ENCODE measurements at regions of chr11 and their contacts with region 1.

Region 1: DNA sequence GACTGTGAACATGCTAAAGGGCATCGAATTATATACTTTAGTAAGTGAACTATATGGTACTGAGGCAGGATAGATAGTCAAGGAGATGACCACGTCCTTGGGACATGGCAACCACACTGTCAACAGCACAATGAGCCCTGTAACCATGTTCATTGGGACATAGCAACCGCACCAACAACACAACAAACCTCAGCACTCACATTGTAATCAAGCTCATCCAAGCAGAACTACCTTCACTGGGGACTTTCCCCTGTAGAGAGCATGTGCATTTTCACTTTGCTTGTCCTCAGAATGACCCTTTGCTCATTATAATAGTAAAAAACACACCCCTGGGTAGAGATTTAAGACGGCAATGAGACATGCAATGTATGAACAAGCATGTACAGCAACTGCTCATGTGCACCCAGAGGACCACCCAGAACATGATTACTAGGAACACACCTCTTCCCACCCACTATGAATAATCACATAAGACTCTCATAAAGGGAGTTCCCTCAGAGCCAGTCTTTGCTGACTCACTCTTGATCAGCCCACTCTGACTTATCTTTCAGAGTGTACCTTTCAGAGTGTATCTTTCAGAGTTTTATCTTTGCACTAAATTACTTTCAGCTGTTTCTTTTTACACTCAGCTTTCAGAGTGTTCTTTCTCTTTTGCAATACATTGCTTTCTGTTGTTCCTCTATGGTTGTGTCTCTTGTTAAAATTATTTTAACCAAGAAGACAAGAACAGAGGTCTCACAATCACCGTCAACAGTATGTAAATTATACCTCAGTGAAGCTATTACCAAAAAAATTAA is 4.1 kb upstream of the PLAAT2 start:
- DNase-seq: peak; percentile 44
- ATAC-seq: peak; percentile 79
- H3K4me3 Mint-ChIP-seq: peak overlapping the region; percentile 78
- H3K27ac Mint-ChIP-seq: peak overlapping the region; percentile 96
- H3K4me1 Mint-ChIP-seq: peaks cover 58% of the 10 kb centered on the region
- H3K27me3 Mint-ChIP-seq: peaks cover 5% of the 10 kb centered on the region
- CTCF ChIP-seq: no peak

Region 2: DNA sequence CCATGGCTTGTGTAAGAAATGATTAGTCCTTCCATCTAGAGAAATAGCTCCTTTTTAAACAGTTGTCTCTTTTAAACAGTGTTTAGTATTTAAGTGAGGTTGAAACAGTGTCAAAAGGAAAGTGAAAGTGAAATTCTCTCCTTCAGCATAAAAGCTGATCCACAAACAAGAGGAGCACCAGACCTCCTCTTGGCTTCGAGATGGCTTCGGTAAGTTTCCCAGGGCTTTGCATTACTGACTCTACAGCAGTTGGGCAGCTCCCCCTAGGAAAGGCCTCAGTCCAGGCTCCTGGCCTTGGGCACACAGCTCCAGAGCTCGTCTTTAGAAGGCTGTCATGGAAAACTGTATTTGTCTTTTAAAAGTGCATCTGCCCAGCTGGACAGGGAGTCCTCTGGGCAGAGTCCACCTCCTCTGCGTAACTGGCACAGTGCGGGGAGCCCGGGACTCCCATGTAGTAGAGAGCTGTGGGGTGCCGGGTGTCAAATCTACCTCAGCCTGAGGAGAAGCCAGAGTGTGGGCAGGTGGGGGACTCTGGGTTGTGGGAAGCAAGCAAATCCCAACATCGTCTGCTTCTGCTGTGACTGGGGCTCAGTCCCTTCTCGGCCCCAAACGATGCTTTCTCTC is 30.5 kb before region 1 on chr11 and contains the start of gene PLAAT4:
- CTCF ChIA-PET with region 1: no interaction called
- POLR2A ChIA-PET with region 1: no interaction called
- intact Hi-C with region 1: loop called (anchors 2 kb)
- DNase-seq: peak; percentile 30
- ATAC-seq: peak; percentile 65
- H3K4me3 Mint-ChIP-seq: peak within 1 kb of the TSS; percentile 84
- H3K27ac Mint-ChIP-seq: peak within 1 kb of the TSS; percentile 59
- H3K4me1 Mint-ChIP-seq: peaks cover 34% of the 10 kb centered on the region
- H3K27me3 Mint-ChIP-seq: peaks cover 3% of the 10 kb centered on the region
- CTCF ChIP-seq: no peak
- total RNA-seq, gene PLAAT4: 3.9 and 4.7 TPM in 2 replicates

Region 3: DNA sequence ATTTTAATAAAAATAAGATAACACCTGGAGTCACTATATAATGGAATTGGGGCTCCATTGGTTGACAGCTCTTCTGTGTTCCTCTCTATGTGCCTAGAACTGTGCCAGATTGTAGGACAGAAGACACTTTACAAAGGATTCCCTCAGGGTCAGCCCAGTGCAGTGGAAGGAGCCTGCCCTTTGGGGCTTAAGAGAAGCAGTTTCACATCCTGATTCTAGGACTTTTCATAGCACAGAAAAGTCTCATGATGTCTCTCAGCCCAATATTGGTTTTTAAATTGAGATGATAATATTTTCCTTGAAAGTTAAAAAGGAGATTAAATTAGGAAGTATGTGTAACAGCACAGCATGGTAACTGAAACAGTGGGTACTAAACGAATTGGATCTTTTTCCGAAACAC is 23.5 kb before region 1 on chr11:
- CTCF ChIA-PET with region 1: no interaction called
- POLR2A ChIA-PET with region 1: no interaction called
- intact Hi-C with region 1: loop called (anchors 2 kb)
- DNase-seq: no peak
- ATAC-seq: peak; percentile 60
- H3K4me3 Mint-ChIP-seq: no peak overlapping the region
- H3K27ac Mint-ChIP-seq: no peak overlapping the region
- H3K4me1 Mint-ChIP-seq: peaks cover 13% of the 10 kb centered on the region
- H3K27me3 Mint-ChIP-seq: no peaks in the 10 kb centered on the region
- CTCF ChIP-seq: no peak

Region 4: DNA sequence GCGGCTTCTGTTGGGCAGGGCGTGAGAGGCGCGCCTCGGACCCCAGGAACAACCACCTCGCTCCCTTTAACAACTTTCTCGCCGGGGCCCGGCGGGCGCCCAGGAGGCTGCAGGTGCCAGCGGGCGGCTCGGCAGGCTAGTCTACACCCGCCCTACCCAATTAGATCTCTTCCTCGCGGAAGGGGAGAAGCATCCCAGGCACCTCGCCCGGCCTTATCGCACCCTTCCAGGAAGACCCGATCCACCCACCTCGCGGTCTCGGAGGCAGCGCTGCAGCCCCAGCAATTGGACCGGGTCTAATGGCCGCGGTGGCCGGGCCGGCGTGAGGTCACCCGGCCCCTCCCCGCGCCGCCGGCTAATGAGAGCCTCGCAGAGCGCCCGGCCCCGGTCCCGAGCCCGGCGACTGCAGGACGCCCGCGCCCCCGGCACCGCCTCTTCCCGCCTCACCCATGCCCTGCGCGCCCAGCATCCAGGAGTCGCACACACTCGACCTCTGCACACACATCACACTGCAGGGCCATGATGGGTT is 47.0 kb after region 1 on chr11 and contains the start of gene PLAAT3:
- CTCF ChIA-PET with region 1: no interaction called
- POLR2A ChIA-PET with region 1: no interaction called
- intact Hi-C with region 1: loop called (anchors 5 kb)
- DNase-seq: peak; percentile 29
- ATAC-seq: peak; percentile 53
- H3K4me3 Mint-ChIP-seq: peak within 1 kb of the TSS; percentile 81
- H3K27ac Mint-ChIP-seq: no peak within 1 kb of the TSS
- H3K4me1 Mint-ChIP-seq: peaks cover 15% of the 10 kb centered on the region
- H3K27me3 Mint-ChIP-seq: peaks cover 4% of the 10 kb centered on the region
- CTCF ChIP-seq: no peak
- total RNA-seq, gene PLAAT3: 0.82 and 1.2 TPM in 2 replicates

Region 5: GRCh38 chr11:63671322-63672155 is 104.3 kb after region 1 on chr11 and contains the start of gene ATL3:
- CTCF ChIA-PET with region 1: no interaction called
- POLR2A ChIA-PET with region 1: no interaction called
- intact Hi-C with region 1: loop called (anchors 1 kb)
- DNase-seq: peak; percentile 97
- ATAC-seq: peak; percentile 95
- H3K4me3 Mint-ChIP-seq: peak within 1 kb of the TSS; percentile 84
- H3K27ac Mint-ChIP-seq: peak within 1 kb of the TSS; percentile 82
- H3K4me1 Mint-ChIP-seq: peaks cover 25% of the 10 kb centered on the region
- H3K27me3 Mint-ChIP-seq: no peaks in the 10 kb centered on the region
- CTCF ChIP-seq: no peak
- total RNA-seq, gene ATL3: 31.8 and 32.9 TPM in 2 replicates

Measured in activated B cell treated with CpG ODN at 0.5 μM for 24 hours (primary cell).